AG04450 (cell line): ENCODE measurements at regions of chr7 and their contacts with region 1.

Region 1: GRCh38 chr7:39894904-39895303 is 55.2 kb upstream of the CDK13 start:
- DNase-seq: no peak
- H3K4me3 ChIP-seq: no peak overlapping the region
- H3K27ac ChIP-seq: no peak overlapping the region
- H3K27me3 ChIP-seq: peaks cover 54% of the 10 kb centered on the region
- CTCF ChIP-seq: no peak

Region 2: GRCh38 chr7:38962028-38962427 is 932.9 kb before region 1 on chr7:
- CTCF ChIA-PET with region 1: no interaction called
- POLR2A ChIA-PET with region 1: no interaction called
- DNase-seq: no peak
- H3K4me3 ChIP-seq: no peak overlapping the region
- H3K27ac ChIP-seq: no peak overlapping the region
- H3K27me3 ChIP-seq: no peaks in the 10 kb centered on the region
- CTCF ChIP-seq: no peak

Region 3: GRCh38 chr7:39838326-39838725 is 56.6 kb before region 1 on chr7:
- CTCF ChIA-PET with region 1: no interaction called
- POLR2A ChIA-PET with region 1: no interaction called
- DNase-seq: no peak
- H3K4me3 ChIP-seq: no peak overlapping the region
- H3K27ac ChIP-seq: no peak overlapping the region
- H3K27me3 ChIP-seq: peaks cover 26% of the 10 kb centered on the region
- CTCF ChIP-seq: no peak

Region 4: GRCh38 chr7:39880556-39880955 is 14.3 kb before region 1 on chr7:
- CTCF ChIA-PET with region 1: interaction called, 23 read pairs
- POLR2A ChIA-PET with region 1: interaction called, 8 read pairs
- DNase-seq: no peak
- H3K4me3 ChIP-seq: no peak overlapping the region
- H3K27ac ChIP-seq: no peak overlapping the region
- H3K27me3 ChIP-seq: no peaks in the 10 kb centered on the region
- CTCF ChIP-seq: no peak

Region 5: DNA sequence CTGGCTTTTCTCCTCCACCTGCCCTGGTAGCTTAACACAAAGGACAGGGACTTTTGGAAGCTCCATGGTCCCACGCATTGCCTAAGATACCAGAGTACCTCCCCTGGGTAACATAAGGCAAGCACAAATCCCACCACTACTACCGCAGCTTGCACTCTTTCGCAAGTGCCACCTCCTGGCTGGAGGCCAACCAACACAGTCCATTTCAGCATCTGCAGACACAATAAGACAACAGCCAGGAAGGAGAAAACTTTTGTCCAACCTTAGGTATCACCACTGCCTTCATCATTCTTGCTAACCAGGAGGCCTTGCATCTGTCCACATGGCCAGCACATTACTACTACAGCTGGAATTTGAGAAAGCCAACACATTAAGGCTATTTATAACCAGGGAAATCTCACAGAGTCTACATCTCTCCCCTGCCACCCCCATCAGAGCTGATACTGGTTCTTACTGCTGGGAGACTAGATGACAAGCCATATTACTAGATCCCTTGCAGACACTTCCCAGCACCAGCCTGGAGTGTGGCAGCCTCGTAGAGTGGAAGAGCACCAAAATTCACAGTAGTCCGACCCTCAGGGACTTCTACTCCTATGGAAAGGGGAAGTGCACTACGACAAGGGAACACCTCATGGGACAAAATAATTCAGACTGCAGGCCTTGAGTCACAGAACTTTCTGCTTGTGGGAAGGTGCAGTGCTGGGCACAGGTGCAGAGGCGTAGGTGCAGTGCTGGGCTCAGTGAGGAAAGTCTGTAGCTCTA is 15.4 kb after region 1 on chr7:
- CTCF ChIA-PET with region 1: interaction called, 11 read pairs
- POLR2A ChIA-PET with region 1: no interaction called
- DNase-seq: peak; percentile 2
- H3K4me3 ChIP-seq: no peak overlapping the region
- H3K27ac ChIP-seq: no peak overlapping the region
- H3K27me3 ChIP-seq: no peaks in the 10 kb centered on the region
- CTCF ChIP-seq: no peak

Region 6: DNA sequence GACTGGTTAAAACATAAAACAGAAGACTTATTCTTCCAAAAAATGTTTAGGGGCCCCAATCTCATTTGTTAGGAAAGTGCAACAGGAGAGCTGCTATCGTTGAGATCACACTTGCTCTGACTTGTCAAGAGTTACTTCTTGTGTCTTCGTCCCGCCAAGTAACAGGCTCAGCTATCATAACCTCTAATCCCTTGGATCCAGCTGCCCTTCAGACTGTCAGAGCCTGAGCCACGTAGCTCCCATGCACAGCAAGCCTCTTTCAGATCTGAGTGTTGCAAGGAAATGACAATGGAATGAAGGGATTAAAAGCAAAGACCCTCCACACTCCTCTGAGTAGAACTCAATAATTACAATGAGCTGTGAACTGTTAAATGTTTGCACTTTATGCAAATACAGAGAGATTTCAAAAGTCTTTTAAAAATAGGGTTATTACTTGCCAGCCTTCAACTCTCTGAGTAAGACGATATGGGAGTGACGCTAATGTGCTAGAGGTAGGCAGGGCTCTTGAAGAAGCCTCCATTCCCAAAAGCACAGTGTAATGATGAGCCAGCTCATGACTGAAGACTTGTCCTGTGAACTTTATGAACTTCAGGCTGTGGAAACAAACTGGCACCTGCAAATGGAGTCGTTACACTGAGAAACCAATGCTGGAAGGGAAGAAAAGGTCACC is 26.7 kb after region 1 on chr7:
- CTCF ChIA-PET with region 1: interaction called, 10 read pairs
- POLR2A ChIA-PET with region 1: no interaction called
- DNase-seq: no peak
- H3K4me3 ChIP-seq: no peak overlapping the region
- H3K27ac ChIP-seq: no peak overlapping the region
- H3K27me3 ChIP-seq: peaks cover 14% of the 10 kb centered on the region
- CTCF ChIP-seq: no peak

Region 7: DNA sequence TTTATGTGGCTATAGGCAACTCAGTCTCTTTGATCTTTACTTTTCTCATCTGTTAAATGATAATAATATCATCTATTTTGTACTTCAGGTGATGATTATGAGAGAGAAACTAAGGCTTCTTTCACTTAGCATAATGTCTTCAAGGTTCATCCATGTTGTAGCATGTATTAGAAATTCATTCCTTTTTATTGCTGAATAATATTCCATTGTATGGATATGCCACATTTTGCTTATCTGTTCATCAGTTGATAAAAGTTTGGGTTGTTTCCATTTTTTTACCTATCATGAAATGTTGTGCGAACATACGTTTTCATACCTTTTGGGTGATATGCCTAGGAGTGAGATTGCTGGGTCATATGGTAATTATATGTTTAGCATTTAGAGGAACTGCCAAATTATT is 48.0 kb after region 1 on chr7:
- CTCF ChIA-PET with region 1: interaction called, 11 read pairs
- POLR2A ChIA-PET with region 1: no interaction called
- DNase-seq: no peak
- H3K4me3 ChIP-seq: no peak overlapping the region
- H3K27ac ChIP-seq: no peak overlapping the region
- H3K27me3 ChIP-seq: no peaks in the 10 kb centered on the region
- CTCF ChIP-seq: no peak

Region 8: GRCh38 chr7:40041456-40041855 is 146.6 kb after region 1 on chr7:
- CTCF ChIA-PET with region 1: interaction called, 18 read pairs
- POLR2A ChIA-PET with region 1: no interaction called
- DNase-seq: no peak
- H3K4me3 ChIP-seq: no peak overlapping the region
- H3K27ac ChIP-seq: no peak overlapping the region
- H3K27me3 ChIP-seq: no peaks in the 10 kb centered on the region
- CTCF ChIP-seq: no peak